Breast epithelium (tissue), 4 donors: ENCODE measurements at regions of chr1 and their contacts with region 1.

Region 1: DNA sequence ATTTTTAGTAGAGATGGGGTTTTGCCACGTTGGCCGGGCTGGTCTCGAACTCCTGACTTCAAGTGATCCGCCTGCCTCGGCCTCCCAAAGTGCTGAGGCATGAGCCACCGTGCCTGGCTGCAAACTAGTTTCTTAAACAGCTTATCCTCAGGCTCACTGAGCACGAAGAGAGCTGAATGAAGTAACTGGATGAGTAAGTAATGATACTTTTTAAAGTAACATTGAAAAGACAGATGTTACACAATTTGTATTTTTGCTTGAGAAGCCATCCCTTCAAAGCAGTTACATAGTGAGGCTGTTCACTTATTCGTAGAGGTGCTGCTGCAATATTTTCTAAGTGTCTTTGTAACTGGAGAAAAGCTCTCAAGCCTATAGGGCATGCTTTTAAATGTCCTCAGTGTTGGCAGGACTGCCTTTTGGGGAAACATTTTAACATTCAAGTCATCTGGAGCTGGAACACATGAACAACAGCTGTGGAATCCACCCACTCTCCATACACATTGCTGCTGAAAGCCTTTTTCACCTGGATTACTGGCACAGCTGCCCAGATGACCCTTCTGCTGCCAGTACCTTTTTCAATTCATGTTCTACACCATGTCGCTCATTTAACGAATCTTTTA is 2.7 kb upstream of the YBX1 start:
- DNase-seq: no peak
- H3K4me3 ChIP-seq: no peak overlapping the region
- H3K27ac ChIP-seq: peak overlapping the region in 1 of 2 donors; percentile 48
- H3K4me1 ChIP-seq: peaks cover 4 to 12% of the 10 kb centered on the region in 2 donors
- H3K27me3 ChIP-seq: no peaks in the 10 kb centered on the region
- CTCF ChIP-seq: no peak
- POLR2A ChIP-seq: no peak

Region 2: DNA sequence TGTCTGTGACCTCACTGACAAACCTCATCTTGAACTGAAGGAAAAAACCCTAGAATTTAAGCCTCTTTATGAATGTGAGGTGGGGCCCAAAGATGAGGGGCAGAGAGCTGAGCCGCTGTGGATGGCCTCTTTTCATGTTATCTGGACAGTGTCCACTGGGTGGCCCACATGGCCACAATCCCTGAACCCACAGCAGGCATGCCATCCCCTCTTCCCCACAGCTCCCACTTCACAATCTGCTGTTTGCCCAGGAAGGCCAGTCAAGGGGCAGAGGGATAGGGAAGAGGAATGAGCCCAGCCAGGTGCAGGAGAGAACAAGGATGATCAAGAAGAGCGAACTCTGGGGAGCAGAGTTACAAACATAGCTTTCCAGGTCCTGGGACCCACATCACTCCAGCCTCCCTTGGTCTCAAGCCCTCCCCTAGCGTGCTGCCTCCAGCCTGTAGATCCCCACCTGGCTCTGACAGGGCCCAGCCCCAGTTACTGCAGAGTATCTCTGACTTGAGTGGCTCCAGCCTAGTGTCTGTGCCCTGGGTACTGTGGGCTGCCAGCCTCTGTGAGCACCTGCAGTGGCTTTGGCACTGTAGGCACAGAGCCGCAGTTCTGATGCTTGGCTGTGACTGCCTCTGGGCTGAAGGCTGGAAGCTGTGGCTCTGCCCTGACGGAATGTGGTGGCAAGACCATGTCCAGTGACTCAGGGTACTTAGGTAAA is 1656.0 kb before region 1 on chr1:
- intact Hi-C with region 1: loop called (anchors 5 kb)
- DNase-seq: no peak
- H3K4me3 ChIP-seq: no peak overlapping the region
- H3K27ac ChIP-seq: no peak overlapping the region
- H3K4me1 ChIP-seq: no peaks in the 10 kb centered on the region
- H3K27me3 ChIP-seq: no peaks in the 10 kb centered on the region
- CTCF ChIP-seq: peak in 1 of 3 donors; percentile 12
- POLR2A ChIP-seq: no peak

Region 3: DNA sequence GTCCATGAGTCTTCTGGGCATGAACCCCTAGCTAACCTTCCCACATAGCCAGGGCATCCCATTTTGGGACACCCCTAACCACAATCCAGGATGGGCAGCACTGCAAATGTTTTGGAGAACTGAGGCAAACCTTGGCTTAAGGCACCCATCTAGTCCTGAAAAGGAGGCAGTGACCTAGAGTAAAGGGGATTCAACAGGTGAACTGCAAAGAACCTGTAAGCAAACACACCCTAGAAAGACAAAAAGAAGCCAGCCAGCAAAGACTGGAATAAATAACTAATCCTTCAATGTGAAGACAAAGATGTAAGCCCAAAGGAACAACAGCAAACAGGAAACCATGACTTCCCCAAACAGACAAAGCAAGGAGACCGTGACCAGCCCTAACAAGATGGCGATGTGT is 78.0 kb before region 1 on chr1:
- intact Hi-C with region 1: no loop called
- DNase-seq: no peak
- H3K4me3 ChIP-seq: no peak overlapping the region
- H3K27ac ChIP-seq: no peak overlapping the region
- H3K4me1 ChIP-seq: no peaks in the 10 kb centered on the region
- H3K27me3 ChIP-seq: no peaks in the 10 kb centered on the region
- CTCF ChIP-seq: no peak
- POLR2A ChIP-seq: no peak

Region 4: GRCh38 chr1:44012941-44013609 is 1333.6 kb after region 1 on chr1:
- intact Hi-C with region 1: no loop called
- DNase-seq: no peak
- H3K4me3 ChIP-seq: no peak overlapping the region
- H3K27ac ChIP-seq: no peak overlapping the region
- H3K4me1 ChIP-seq: no peaks in the 10 kb centered on the region
- H3K27me3 ChIP-seq: no peaks in the 10 kb centered on the region
- CTCF ChIP-seq: no peak
- POLR2A ChIP-seq: no peak